Naive thymus-derived CD4-positive, alpha-beta T cell (primary cell): ENCODE measurements at regions of chr11 and their contacts with region 1.

Region 1: DNA sequence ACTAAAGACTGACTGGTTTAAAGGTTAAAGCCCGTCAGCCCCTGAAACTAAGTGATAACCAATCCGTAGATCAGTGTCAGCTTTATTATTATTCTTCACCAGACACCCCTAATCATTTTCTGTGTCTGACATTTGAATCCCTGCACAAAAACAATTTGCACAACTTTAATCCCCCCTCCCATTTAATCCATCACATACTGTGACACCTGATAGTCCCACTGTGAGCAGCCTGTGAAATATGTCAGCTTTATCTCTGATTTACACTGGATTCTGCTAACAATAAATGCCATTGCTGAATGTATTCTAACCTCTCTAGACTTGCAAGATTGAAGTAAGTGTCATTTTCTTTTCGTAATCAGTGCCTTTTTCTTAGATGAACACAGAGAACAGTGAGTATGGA is 2089.0 kb upstream of the RAG2 start:
- DNase-seq: no peak
- ATAC-seq: no peak
- H3K4me3 ChIP-seq: no peak overlapping the region
- H3K4me3 Mint-ChIP-seq: no peak overlapping the region
- H3K27ac ChIP-seq: no peak overlapping the region
- H3K27ac Mint-ChIP-seq: no peak overlapping the region
- H3K4me1 ChIP-seq: no peaks in the 10 kb centered on the region
- H3K4me1 Mint-ChIP-seq: no peaks in the 10 kb centered on the region
- H3K27me3 ChIP-seq: no peaks in the 10 kb centered on the region
- H3K27me3 Mint-ChIP-seq: no peaks in the 10 kb centered on the region

Region 2: DNA sequence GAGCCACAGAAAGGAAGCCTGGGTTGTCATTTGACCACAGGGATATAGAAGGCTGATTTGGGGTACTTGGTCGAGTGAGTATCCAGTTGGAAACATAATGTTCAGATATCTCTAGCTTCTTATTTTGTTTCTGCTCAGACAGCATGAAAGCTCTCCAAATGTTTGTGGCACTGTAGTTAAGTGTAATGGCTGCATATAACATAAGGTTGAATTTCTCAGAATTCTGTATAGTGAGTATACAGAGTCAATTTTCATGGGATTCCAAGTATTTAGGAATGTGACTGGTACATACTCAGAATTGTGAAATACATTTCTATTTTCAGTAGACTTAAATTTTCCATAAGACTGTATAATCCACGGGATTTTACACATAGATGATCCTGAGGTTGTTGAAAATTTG is 13.1 kb after region 1 on chr11:
- CTCF ChIA-PET with region 1: no interaction called
- POLR2A ChIA-PET with region 1: no interaction called
- intact Hi-C with region 1: loop called in 1 of 2 experiments (anchors 2 kb)
- DNase-seq: no peak
- ATAC-seq: no peak
- H3K4me3 ChIP-seq: no peak overlapping the region
- H3K4me3 Mint-ChIP-seq: no peak overlapping the region
- H3K27ac ChIP-seq: no peak overlapping the region
- H3K27ac Mint-ChIP-seq: no peak overlapping the region
- H3K4me1 ChIP-seq: no peaks in the 10 kb centered on the region
- H3K4me1 Mint-ChIP-seq: no peaks in the 10 kb centered on the region
- H3K27me3 ChIP-seq: no peaks in the 10 kb centered on the region
- H3K27me3 Mint-ChIP-seq: no peaks in the 10 kb centered on the region